ENCODE measurements at regions of chr2 and their contacts with region 1.

Region 1: GRCh38 chr2:230472621-230473018 is 56.6 kb downstream of the SP100 start:
- DNase-seq: peak; percentile 11
- H3K4me3 Mint-ChIP-seq: peak overlapping the region; percentile 1
- H3K27ac Mint-ChIP-seq: peak overlapping the region; percentile 85
- H3K4me1 Mint-ChIP-seq: peaks cover 48% of the 10 kb centered on the region
- H3K27me3 Mint-ChIP-seq: no peaks in the 10 kb centered on the region

Region 2: DNA sequence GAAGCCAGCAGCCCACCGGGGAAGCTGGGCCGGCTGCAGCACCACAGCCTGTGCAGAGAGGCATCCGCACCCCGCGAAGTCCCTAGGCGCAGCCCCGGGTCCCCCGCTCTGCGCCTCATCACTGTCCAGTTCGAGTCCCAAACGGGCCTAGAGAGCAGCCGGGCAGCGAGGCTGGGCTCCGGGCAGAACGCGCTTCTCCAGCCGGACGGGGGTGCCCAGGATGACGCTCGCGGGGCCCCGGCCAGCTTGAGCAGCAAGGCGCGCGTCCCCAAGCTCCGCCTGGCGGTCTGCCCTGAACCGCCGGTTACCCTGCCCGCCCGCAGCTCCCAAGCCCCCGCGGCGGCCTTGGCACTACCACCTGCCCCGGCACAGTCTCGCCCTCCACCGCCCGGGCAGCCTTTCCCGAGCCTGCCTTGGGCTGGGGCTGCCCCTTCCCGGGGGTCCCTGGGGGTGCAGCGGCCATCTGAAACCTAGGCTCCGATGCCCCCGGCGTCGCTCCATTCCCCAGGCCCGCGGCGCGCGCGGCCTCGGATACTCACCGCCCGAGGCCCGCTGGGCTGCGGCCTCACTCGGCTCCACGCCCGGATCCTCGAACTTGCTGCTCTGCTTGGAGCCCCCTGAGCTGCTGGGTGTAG is 404.5 kb before region 1 on chr2:
- intact Hi-C with region 1: no loop called
- DNase-seq: peak; percentile 22
- H3K4me3 Mint-ChIP-seq: peak overlapping the region; percentile 88
- H3K27ac Mint-ChIP-seq: no peak overlapping the region
- H3K4me1 Mint-ChIP-seq: peaks cover 22% of the 10 kb centered on the region
- H3K27me3 Mint-ChIP-seq: peaks cover 21% of the 10 kb centered on the region

Region 3: DNA sequence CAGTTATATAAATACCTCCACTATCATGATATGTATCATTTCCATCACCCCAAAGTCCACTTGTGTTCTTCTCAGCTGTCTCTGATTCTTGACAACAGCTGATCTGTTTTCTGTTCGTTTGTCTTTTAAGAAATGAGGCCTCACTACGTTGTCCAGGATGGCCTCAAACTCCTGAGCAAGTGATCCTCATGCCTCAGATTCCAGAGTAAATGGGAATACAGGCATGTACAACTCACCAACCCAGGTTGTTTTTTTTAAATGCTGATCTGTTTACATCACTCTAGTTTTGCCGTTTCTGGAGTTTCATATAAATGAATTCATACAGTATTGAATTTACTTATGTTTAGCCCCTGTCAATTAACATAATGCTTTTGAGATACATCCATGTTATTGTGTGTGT is 95.5 kb before region 1 on chr2:
- intact Hi-C with region 1: no loop called
- DNase-seq: no peak
- H3K4me3 Mint-ChIP-seq: no peak overlapping the region
- H3K27ac Mint-ChIP-seq: no peak overlapping the region
- H3K4me1 Mint-ChIP-seq: peaks cover 14% of the 10 kb centered on the region
- H3K27me3 Mint-ChIP-seq: peaks cover 2% of the 10 kb centered on the region

Region 4: GRCh38 chr2:230447455-230448451 is 24.9 kb before region 1 on chr2:
- intact Hi-C with region 1: loop called (anchors 1 kb)
- DNase-seq: peak; percentile 40
- H3K4me3 Mint-ChIP-seq: peak overlapping the region; percentile 58
- H3K27ac Mint-ChIP-seq: peak overlapping the region; percentile 96
- H3K4me1 Mint-ChIP-seq: peaks cover 71% of the 10 kb centered on the region
- H3K27me3 Mint-ChIP-seq: no peaks in the 10 kb centered on the region

Measured in activated T-helper 1 cell treated with anti-CD3 and anti-CD28 coated beads, Interleukin-12 subunit alpha, Interleukin-12 subunit beta, Interleukin-2, Interleukin-4 antibody, amounts not matched to agents 30 ng/mL and 10 ng/mL and 1 ng/mL, durations not matched to agents 14 hours and 24 hours and 36 hours (primary cell).